Left ventricle myocardium superior (tissue), 1 donor: ENCODE measurements at regions of chr10 and their contacts with region 1.

Region 1: DNA sequence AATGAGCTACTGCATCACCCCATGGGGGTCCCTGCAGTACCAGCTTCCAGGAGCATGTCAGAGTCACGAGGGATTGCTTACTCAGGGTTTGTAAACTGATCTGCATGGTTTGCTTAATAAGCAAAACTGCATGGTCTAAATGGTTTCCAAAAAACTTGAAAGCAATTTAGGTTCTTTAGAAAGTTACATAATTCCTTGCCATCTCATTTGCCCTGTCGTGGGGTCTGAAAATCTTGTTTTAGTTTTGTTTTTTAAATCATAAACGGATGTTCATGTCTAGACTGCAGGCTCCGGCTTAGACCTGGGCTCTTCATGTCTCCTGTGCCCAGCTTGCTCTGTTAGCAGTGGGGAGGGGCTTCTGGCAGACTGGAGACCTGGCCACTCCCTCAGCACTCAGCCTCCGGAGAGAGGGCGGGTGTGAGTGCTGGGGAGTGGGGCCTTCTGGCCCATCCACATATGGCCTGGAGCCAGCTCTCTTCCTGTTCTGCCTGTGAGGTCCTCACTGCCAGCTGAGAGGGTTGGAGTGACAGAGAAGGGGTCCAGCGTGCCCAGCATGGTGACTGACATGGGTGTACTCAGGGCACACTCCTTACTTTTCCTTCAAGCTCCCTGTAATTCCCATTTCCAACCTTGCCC is 17.5 kb downstream of the PRF1 start:
- DNase-seq: no peak
- ATAC-seq: no peak

Region 2: GRCh38 chr10:70247360-70247759 is 337.7 kb before region 1 on chr10:
- intact Hi-C with region 1: no loop called
- DNase-seq: no peak
- ATAC-seq: no peak

Region 3: GRCh38 chr10:70622981-70623844 is 38.2 kb after region 1 on chr10:
- intact Hi-C with region 1: loop called (anchors 2 kb)
- DNase-seq: no peak
- ATAC-seq: peak; percentile 86